Activated naive CD4-positive, alpha-beta T cell treated with anti-CD3 and anti-CD28 coated beads for 36 hours (primary cell): ENCODE measurements at regions of chr9 and their contacts with region 1.

Region 1: DNA sequence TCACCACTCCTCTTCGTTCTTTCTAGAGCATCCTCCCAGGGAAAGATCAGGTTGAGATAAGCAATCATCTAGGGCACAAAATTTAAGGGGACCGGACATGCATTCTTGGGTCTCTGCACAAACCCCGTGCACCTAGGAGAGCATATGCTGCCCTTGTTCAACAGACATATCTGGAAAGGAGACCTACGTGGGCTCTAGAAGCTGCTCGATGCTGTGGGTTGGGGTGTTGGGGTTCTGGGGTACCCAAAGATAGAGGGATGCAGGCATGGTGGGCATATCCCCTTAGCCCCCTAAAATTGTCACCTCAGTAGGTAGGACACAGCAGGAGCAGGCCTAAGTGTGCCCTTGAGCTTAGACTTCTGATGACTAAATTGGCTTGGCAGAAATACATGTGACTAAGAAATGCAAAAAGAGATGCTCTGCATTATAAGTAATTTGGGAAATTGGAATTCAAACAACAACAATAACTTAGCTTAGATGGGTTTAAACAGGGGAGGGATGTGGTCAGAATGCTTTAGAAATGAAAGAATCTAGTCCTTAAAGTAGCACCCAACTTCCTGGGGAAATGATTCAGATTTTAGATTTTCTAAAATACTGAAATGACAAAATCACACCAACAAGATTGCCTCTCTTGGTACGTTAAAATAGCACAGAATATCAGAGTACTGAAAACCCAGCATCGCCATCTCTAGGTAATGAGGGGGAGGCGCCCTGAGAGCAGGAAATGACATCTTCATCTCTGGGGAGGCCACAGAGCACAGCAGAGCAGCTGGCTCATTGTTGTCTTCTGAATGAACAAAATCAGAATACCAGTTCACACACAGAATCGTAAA is 172.3 kb downstream of the GNA14 start:
- DNase-seq: peak; percentile 87
- H3K4me3 Mint-ChIP-seq: no peak overlapping the region
- H3K27ac Mint-ChIP-seq: peak overlapping the region; percentile 91
- H3K4me1 Mint-ChIP-seq: peaks cover 27% of the 10 kb centered on the region
- H3K27me3 Mint-ChIP-seq: no peaks in the 10 kb centered on the region

Region 2: GRCh38 chr9:77304543-77304942 is 171.3 kb before region 1 on chr9:
- CTCF ChIA-PET with region 1: no interaction called
- intact Hi-C with region 1: loop called (anchors 1 kb)
- DNase-seq: no peak
- H3K4me3 Mint-ChIP-seq: no peak overlapping the region
- H3K27ac Mint-ChIP-seq: peak overlapping the region; percentile 53
- H3K4me1 Mint-ChIP-seq: peaks cover 13% of the 10 kb centered on the region
- H3K27me3 Mint-ChIP-seq: no peaks in the 10 kb centered on the region

Region 3: DNA sequence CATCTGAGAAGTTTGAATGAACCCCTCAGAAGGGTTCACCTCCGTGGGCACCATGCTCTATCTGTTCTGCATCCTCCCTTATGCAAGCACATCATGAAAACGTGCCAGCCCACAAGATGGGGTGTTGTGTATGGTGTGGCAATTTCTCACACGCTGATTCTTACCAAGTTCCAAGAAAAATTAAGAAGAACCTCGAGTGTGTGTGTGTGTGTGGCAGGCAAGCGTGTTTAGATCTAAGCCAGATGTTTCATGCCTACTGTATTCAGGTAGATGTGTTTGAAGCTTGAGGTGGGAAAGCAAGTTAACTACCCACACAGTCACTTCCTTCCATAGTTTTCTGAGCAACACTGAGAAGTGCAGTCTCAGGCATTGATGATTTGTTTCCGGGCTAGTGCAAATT is 250.0 kb after region 1 on chr9:
- CTCF ChIA-PET with region 1: no interaction called
- intact Hi-C with region 1: loop called (anchors 1 kb)
- DNase-seq: peak; percentile 59
- H3K4me3 Mint-ChIP-seq: no peak overlapping the region
- H3K27ac Mint-ChIP-seq: peak overlapping the region; percentile 57
- H3K4me1 Mint-ChIP-seq: peaks cover 49% of the 10 kb centered on the region
- H3K27me3 Mint-ChIP-seq: no peaks in the 10 kb centered on the region

Region 4: GRCh38 chr9:78074385-78075291 is 598.8 kb after region 1 on chr9:
- CTCF ChIA-PET with region 1: no interaction called
- intact Hi-C with region 1: loop called (anchors 1 kb)
- DNase-seq: peak; percentile 54
- H3K4me3 Mint-ChIP-seq: no peak overlapping the region
- H3K27ac Mint-ChIP-seq: peak overlapping the region; percentile 81
- H3K4me1 Mint-ChIP-seq: peaks cover 43% of the 10 kb centered on the region
- H3K27me3 Mint-ChIP-seq: no peaks in the 10 kb centered on the region

Region 5: GRCh38 chr9:78235756-78236538 is 760.1 kb after region 1 on chr9 and contains the start of gene CEP78:
- CTCF ChIA-PET with region 1: no interaction called
- intact Hi-C with region 1: loop called (anchors 5 kb)
- DNase-seq: peak; percentile 91
- H3K4me3 Mint-ChIP-seq: peak within 1 kb of the TSS; percentile 96
- H3K27ac Mint-ChIP-seq: peak within 1 kb of the TSS; percentile 91
- H3K4me1 Mint-ChIP-seq: peaks cover 34% of the 10 kb centered on the region
- H3K27me3 Mint-ChIP-seq: no peaks in the 10 kb centered on the region
- total RNA-seq, gene CEP78: 39.5 to 39.7 TPM